ENCODE measurements at regions of chr14 and their contacts with region 1.

Region 1: DNA sequence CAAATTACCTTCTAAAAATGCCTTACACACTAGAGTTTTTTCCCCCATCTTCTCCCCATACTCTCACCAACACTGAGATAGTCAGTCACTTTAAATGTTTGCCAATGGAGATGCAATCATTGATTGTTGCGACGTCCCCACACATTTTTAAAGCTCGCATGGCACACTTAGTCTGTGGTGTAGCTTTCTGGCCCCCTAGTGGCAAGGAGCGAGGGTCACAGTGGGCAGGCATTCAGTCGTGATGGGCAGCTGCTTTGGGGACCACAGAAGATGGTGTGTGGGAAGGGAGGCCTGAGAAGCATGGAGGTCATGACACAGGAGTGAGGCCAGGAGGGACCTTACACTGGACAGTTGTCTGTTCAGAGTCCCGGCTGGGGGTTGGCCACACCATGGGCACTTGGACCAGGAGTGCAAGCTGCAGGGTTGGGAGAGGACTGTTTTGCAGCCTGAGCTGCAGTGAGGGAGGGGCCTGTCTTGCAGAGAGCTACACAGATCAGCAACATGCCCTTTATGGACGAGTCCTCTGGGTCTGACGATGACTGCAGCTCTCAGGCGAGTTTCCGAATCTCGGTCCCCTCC is 28.7 kb downstream of the PIGH start:
- DNase-seq: peak; percentile 85
- H3K4me3 ChIP-seq: no peak overlapping the region; a peak in 1 of 4 replicates
- H3K27ac ChIP-seq: no peak overlapping the region
- H3K4me1 ChIP-seq: no peaks in the 10 kb centered on the region; a peak in 1 of 4 replicates
- H3K27me3 ChIP-seq: no peaks in the 10 kb centered on the region
- CTCF ChIP-seq: peak; percentile 92
- EP300 ChIP-seq: no peak
- RAD21 ChIP-seq: peak; percentile 87

Region 2: GRCh38 chr14:67373347-67373746 is 198.0 kb before region 1 on chr14:
- CTCF ChIA-PET with region 1: no interaction called
- POLR2A ChIA-PET with region 1: no interaction called
- DNase-seq: no peak
- H3K4me3 ChIP-seq: no peak overlapping the region
- H3K27ac ChIP-seq: no peak overlapping the region
- H3K4me1 ChIP-seq: no peaks in the 10 kb centered on the region
- H3K27me3 ChIP-seq: no peaks in the 10 kb centered on the region
- CTCF ChIP-seq: no peak
- EP300 ChIP-seq: no peak
- RAD21 ChIP-seq: no peak

Region 3: GRCh38 chr14:67426983-67427606 is 144.3 kb before region 1 on chr14:
- CTCF ChIA-PET with region 1: interaction called, 319 read pairs
- POLR2A ChIA-PET with region 1: interaction called, 3 read pairs
- DNase-seq: peak; percentile 85
- H3K4me3 ChIP-seq: peak overlapping the region in 1 of 2 experiments; percentile 44; a peak in 1 of 4 replicates
- H3K27ac ChIP-seq: no peak overlapping the region
- H3K4me1 ChIP-seq: no peaks in the 10 kb centered on the region
- H3K27me3 ChIP-seq: no peaks in the 10 kb centered on the region; the same call in 1 of the 2 replicates
- CTCF ChIP-seq: peak; percentile 83
- EP300 ChIP-seq: no peak
- RAD21 ChIP-seq: peak; percentile 95

Region 4: DNA sequence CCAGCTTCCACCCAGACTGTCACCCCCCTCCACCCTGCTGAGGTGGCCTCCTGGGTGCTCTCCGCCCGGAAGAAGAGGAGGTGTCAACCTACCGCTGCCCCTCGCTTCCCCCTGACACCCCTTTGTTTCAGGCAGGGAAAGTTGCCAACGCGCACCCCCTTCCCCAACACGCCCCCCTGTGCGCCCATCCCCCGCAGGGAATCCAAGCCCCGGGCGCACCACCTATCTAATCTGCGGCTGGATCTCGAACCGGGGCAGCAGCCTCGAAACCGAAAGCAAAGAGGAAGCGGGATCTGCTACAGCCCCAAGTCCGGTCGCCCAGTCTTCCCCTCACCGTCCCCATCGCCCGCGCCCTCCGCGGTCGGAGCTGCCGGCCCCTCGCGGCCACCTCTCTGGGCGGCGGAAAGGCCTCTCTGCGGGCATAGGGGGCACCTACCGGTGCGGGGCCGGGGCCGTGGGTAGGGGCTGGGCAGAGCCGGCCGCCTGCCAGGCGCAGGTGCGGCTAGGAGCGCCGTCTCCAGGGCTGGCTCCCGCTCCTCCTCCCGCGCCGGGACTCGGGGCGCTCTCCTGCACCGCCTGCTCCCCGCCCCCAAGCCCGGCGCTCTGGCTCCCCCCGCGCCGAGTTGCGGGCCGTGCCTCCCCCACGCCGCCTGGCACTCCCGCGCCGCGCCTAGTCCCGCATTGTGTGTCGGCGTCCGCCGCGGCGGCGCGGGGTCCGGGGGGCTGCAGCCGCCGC is 56.5 kb before region 1 on chr14:
- CTCF ChIA-PET with region 1: interaction called, 18 read pairs
- POLR2A ChIA-PET with region 1: no interaction called
- DNase-seq: peak; percentile 83
- H3K4me3 ChIP-seq: peak overlapping the region; percentile 74 to 78
- H3K27ac ChIP-seq: no peak overlapping the region
- H3K4me1 ChIP-seq: peaks cover 0 to 18% of the 10 kb centered on the region in 2 experiments; a peak in 2 of 4 replicates
- H3K27me3 ChIP-seq: peaks cover 21% of the 10 kb centered on the region; the same call in 1 of the 2 replicates
- CTCF ChIP-seq: no peak
- EP300 ChIP-seq: no peak
- RAD21 ChIP-seq: no peak

Region 5: GRCh38 chr14:67541448-67542387 is 29.6 kb before region 1 on chr14:
- CTCF ChIA-PET with region 1: interaction called, 16 read pairs
- POLR2A ChIA-PET with region 1: no interaction called
- DNase-seq: no peak
- H3K4me3 ChIP-seq: no peak overlapping the region
- H3K27ac ChIP-seq: no peak overlapping the region
- H3K4me1 ChIP-seq: no peaks in the 10 kb centered on the region
- H3K27me3 ChIP-seq: 0 out of 2 replicates have a peak, but pooled peaks cover 4% of the 10 kb centered on the region
- CTCF ChIP-seq: no peak
- EP300 ChIP-seq: no peak
- RAD21 ChIP-seq: no peak

Region 6: GRCh38 chr14:67583711-67584644 is 12.6 kb after region 1 on chr14:
- CTCF ChIA-PET with region 1: interaction called, 90 read pairs
- POLR2A ChIA-PET with region 1: no interaction called
- DNase-seq: peak; percentile 80
- H3K4me3 ChIP-seq: no peak overlapping the region; a peak in 1 of 4 replicates
- H3K27ac ChIP-seq: no peak overlapping the region
- H3K4me1 ChIP-seq: no peaks in the 10 kb centered on the region
- H3K27me3 ChIP-seq: no peaks in the 10 kb centered on the region
- CTCF ChIP-seq: peak; percentile 74
- EP300 ChIP-seq: no peak
- RAD21 ChIP-seq: peak; percentile 85

Region 7: GRCh38 chr14:67722293-67722692 is 150.9 kb after region 1 on chr14:
- CTCF ChIA-PET with region 1: no interaction called
- POLR2A ChIA-PET with region 1: no interaction called
- DNase-seq: peak; percentile 58
- H3K4me3 ChIP-seq: peak overlapping the region in 1 of 2 experiments; percentile 2; a peak in 1 of 4 replicates
- H3K27ac ChIP-seq: no peak overlapping the region
- H3K4me1 ChIP-seq: peaks cover 0 to 8% of the 10 kb centered on the region in 2 experiments; a peak in 1 of 4 replicates
- H3K27me3 ChIP-seq: peaks cover 18% of the 10 kb centered on the region
- CTCF ChIP-seq: no peak
- EP300 ChIP-seq: no peak
- RAD21 ChIP-seq: no peak

Measured in SK-N-SH (cell line).